Ascending aorta (tissue), 2 donors: ENCODE measurements at regions of chr10 and their contacts with region 1.

Region 1: DNA sequence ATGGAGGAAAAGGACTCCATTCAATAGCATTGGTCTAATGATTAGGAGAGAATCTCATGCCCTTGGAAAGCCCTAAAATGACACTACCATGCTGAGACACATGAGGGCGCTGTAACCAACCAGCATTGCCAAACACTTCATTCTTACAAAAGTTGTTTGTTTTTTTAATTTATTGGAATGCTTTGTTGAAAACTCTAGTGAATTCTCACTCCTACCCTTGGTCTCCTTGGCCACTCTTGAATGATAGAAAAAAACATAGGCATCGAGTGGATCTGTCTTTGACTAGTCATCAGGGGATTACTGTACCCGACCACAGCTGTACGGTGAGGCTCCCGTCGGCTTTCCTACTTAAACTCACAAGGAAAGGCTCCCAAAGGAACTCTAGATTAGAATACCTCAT is 29.3 kb upstream of the ADD3 start:
- DNase-seq: no peak
- H3K4me3 ChIP-seq: peak overlapping the region in 1 of 2 donors; percentile 31
- H3K27ac ChIP-seq: peak overlapping the region; percentile 81
- H3K4me1 ChIP-seq: peaks cover 4 to 47% of the 10 kb centered on the region in 2 donors
- H3K27me3 ChIP-seq: no peaks in the 10 kb centered on the region
- CTCF ChIP-seq: peak; percentile 9 to 60 (median 51)

Region 2: GRCh38 chr10:109922976-109923921 is 55.2 kb before region 1 on chr10 and contains the start of gene XPNPEP1:
- intact Hi-C with region 1: loop called (anchors 5 kb)
- DNase-seq: peak; percentile 65 to 94
- H3K4me3 ChIP-seq: peak within 1 kb of the TSS; percentile 94 to 97
- H3K27ac ChIP-seq: peak within 1 kb of the TSS; percentile 93 to 98
- H3K4me1 ChIP-seq: peaks cover 3 to 10% of the 10 kb centered on the region in 2 donors
- H3K27me3 ChIP-seq: no peaks in the 10 kb centered on the region
- CTCF ChIP-seq: peak in 2 of 3 experiments; percentile 5 to 12
- total RNA-seq, gene XPNPEP1: 212 TPM

Region 3: GRCh38 chr10:109959259-109960145 is 19.0 kb before region 1 on chr10:
- intact Hi-C with region 1: loop called (anchors 2 kb)
- DNase-seq: no peak
- H3K4me3 ChIP-seq: no peak overlapping the region
- H3K27ac ChIP-seq: no peak overlapping the region
- H3K4me1 ChIP-seq: peaks cover 0 to 17% of the 10 kb centered on the region in 2 donors
- H3K27me3 ChIP-seq: no peaks in the 10 kb centered on the region
- CTCF ChIP-seq: no peak

Region 4: GRCh38 chr10:110076559-110077318 is 98.3 kb after region 1 on chr10:
- intact Hi-C with region 1: loop called (anchors 5 kb)
- DNase-seq: peak in 1 of 2 donors; percentile 66
- H3K4me3 ChIP-seq: no peak overlapping the region
- H3K27ac ChIP-seq: peak overlapping the region; percentile 57 to 63
- H3K4me1 ChIP-seq: peaks cover 6 to 46% of the 10 kb centered on the region in 2 donors
- H3K27me3 ChIP-seq: no peaks in the 10 kb centered on the region
- CTCF ChIP-seq: no peak